Activated CD8-positive, alpha-beta T cell treated with anti-CD3 and anti-CD28 coated beads for 36 hours (primary cell): ENCODE measurements at regions of chr14 and their contacts with region 1.

Region 1: GRCh38 chr14:63641473-63642228 is at the start of gene WDR89:
- DNase-seq: peak; percentile 98
- ATAC-seq: peak; percentile 88
- H3K4me3 Mint-ChIP-seq: peak within 1 kb of the TSS; percentile 98
- H3K27ac Mint-ChIP-seq: peak within 1 kb of the TSS; percentile 100
- H3K4me1 Mint-ChIP-seq: peaks cover 36% of the 10 kb centered on the region
- H3K27me3 Mint-ChIP-seq: no peaks in the 10 kb centered on the region
- CTCF ChIP-seq: peak; percentile 89
- total RNA-seq, gene WDR89: 30.9 to 33.4 TPM

Region 2: GRCh38 chr14:63727774-63728728 is 86.4 kb after region 1 on chr14 and contains the start of gene SGPP1:
- CTCF ChIA-PET with region 1: interaction called, 3 read pairs
- POLR2A ChIA-PET with region 1: interaction called, 4 read pairs
- intact Hi-C with region 1: loop called (anchors 5 kb)
- DNase-seq: peak; percentile 85
- ATAC-seq: peak; percentile 95
- H3K4me3 Mint-ChIP-seq: peak within 1 kb of the TSS; percentile 100
- H3K27ac Mint-ChIP-seq: peak within 1 kb of the TSS; percentile 94
- H3K4me1 Mint-ChIP-seq: peaks cover 26% of the 10 kb centered on the region
- H3K27me3 Mint-ChIP-seq: no peaks in the 10 kb centered on the region
- CTCF ChIP-seq: no peak
- total RNA-seq, gene SGPP1: 10.5 to 10.9 TPM

Region 3: GRCh38 chr14:63759456-63759855 is 117.8 kb after region 1 on chr14:
- CTCF ChIA-PET with region 1: interaction called, 3 read pairs
- POLR2A ChIA-PET with region 1: no interaction called
- intact Hi-C with region 1: loop called (anchors 10 kb)
- DNase-seq: peak; percentile 24
- ATAC-seq: peak; percentile 88
- H3K4me3 Mint-ChIP-seq: peak overlapping the region; percentile 60
- H3K27ac Mint-ChIP-seq: peak overlapping the region; percentile 85
- H3K4me1 Mint-ChIP-seq: peaks cover 9% of the 10 kb centered on the region
- H3K27me3 Mint-ChIP-seq: no peaks in the 10 kb centered on the region
- CTCF ChIP-seq: no peak